ENCODE measurements at regions of chr1 and their contacts with region 1.

Region 1: DNA sequence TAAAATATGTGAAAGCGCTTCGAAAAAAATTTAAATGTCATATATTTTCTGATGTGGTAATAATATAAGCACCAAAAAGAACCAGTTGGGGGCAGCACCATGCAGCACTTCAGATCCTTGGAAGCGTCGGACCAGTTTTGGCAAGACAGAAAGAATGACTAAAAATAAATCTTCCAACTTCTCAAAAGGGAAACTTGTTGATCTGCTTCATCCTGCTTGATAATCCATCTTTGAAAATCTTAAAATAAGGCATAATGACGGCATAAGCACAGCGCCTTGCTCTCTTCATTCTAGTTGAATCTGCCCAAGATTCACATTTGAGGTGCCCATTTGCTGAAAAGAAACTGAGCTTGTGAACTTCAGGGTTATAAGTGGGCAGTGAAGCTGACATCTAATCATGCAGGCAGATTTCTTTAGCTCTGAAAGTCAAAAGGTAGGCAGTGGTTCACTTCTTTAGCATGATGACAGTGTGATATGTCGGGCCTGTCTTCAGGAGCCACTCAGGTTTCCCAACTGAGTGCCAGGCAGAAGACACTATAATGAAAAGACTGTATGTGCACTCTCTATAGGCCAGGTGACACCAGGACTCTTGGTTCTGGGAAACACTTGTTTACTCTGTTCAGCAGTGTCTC is 19.8 kb upstream of the MUTYH start:
- DNase-seq: no peak

Region 2: DNA sequence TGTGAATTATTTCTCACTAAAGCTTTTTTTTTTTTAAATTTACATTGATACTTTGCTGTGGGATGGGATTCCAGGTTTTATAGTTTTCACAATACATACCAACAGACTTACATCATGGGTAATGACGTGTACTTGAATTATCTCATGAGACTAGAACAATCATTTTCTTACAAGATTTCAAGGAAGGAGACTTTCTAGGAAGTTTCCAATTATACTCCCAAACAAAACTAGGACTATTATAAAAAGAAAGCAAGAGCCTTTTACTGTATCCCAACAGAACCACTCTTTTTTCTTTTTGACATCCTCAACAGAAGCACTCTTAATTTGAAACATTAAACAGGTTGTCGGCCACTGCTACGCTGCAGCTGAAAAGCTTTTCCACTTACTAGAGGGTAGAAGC is 82.3 kb after region 1 on chr1:
- intact Hi-C with region 1: no loop called
- DNase-seq: no peak

Region 3: DNA sequence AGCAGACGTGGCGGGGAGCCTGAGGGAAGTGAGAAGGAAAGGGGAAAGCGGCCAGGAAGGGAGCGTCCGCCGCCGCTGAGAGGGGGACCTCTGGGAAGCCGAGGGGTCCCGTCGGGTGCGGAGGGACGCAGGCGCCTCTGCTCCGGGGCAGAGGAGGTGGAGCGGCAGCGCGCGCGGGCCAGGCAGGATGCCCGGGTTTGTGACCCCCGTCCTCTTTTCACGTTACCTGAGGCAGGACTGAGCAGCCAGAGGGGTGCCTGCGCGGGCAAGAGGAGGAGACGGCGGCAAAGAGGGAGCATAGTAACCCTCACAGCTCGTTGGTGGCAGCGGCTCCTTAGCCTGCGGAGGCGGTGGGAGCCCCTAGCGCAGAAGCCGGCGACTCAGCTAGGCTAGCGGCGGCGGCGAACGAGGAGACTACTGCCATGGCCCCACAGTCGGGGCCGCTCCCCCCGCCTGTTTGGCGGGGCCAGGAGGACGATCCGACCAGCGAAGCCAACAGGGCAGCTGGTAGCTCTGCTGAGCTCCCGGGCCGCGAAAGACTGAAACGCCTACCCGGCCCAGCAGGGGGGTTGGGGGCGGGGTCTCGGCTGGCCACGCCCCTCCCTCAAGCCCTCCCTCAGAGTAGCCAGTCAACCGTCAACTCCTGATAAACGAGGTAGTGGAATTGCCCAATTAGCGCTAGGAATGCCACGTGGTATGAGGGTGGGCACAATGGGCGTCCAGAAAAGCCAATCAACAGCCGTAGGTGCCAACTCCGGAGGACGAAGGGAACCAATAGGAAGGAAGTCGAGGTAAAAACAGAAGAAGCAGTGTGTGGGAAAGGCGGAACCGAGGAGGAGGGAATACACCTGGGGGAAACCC is 130.9 kb after region 1 on chr1 and contains the start of gene TESK2:
- intact Hi-C with region 1: loop called (anchors 2 to 5 kb)
- DNase-seq: peak; percentile 98
- total RNA-seq, gene TESK2: 2.8 to 3.0 TPM

Region 4: GRCh38 chr1:45569962-45570581 is 210.1 kb after region 1 on chr1:
- intact Hi-C with region 1: loop called in 1 of 2 experiments (anchors 5 kb)
- DNase-seq: peak; percentile 88

Measured in posterior vena cava (tissue), 2 donors.